Colonic mucosa (tissue), 4 donors: ENCODE measurements at regions of chr6 and their contacts with region 1.

Region 1: DNA sequence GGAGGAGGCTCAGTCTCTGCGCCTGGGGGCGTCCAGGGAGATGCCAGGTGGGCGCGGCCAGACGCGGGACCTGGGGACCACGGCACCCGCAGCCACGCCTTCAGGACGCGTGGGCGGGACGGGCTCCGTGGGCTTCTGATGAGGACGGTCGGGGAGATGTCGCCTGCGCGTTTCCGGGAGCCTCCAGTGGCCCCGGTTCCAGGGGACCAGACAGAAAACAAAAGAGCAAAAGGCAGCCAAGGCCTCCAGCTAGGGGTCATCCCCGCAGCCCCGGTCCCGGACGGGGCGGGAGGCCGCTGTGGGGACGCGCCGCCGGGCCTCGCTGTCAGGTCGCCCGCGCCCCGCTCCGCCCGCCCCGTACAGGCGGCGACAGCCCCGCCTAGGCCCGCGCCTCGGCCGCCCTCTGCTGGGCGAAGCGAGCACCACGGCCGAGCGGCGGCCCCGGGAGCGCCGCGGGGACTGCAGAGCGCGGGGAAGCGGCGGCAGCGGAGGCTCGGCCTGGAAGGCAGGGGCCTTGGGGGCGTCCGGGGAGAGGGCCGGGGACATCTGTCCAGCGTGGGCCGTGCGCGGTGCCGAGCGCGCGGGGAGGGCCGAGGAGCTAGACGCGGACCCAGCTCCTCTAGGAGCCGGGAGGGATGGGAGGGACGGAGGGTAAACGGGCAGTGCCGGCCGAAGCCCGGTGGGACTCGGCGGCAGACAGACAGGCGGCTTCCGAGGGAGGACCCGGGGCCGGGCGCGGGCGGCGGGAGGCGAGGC is 48.7 kb downstream of the TMEM242 start:
- DNase-seq: peak; percentile 64
- H3K4me3 ChIP-seq: peak overlapping the region; percentile 78
- H3K27ac ChIP-seq: peak overlapping the region; percentile 47
- H3K4me1 ChIP-seq: no peaks in the 10 kb centered on the region
- H3K27me3 ChIP-seq: no peaks in the 10 kb centered on the region
- CTCF ChIP-seq: peak; percentile 57

Region 2: DNA sequence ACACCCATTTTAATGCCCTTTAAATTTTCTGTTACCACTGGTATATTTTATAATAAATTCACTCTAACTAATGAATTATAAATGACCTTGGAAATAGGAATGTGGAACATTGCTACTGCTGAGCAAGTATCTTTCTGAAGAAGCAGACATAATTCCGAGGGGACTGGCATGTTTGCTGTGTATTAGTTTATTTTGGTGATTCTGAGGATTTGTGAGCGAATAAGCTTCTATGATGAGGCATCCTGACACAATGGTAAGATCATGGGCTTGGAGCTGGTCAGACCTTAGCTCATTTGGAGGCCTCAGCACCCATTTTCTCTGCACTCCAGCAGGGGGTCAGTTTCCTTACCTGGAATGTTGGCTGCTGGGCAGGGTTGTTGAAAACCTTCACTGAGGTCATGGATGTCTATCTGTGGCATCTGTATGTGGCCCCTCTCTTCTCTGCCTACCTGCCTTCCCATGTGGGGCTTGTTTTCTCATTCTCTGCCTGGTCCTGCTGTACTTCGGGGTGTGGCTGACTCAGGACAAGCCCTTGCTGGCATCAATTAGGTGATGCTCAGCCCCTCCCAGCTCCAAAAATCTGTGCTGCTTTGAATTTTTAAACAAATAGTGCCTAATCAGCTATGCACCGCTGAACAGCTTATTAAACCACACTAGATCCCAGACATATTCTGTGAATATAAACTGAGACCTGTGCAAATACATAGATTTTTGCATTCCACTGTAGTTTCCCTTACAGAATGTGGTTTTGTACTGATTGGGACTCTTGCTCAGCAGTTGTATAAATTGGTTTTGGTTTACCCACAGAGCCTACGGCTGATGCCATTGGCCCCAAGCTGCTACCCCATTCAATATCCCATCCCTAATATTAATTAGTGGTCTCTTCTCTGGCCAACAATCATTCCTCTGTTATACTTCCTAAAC is 486.8 kb before region 1 on chr6:
- intact Hi-C with region 1: loop called (anchors 5 kb)
- DNase-seq: no peak
- H3K4me3 ChIP-seq: no peak overlapping the region
- H3K27ac ChIP-seq: no peak overlapping the region
- H3K4me1 ChIP-seq: no peaks in the 10 kb centered on the region
- H3K27me3 ChIP-seq: no peaks in the 10 kb centered on the region
- CTCF ChIP-seq: no peak

Region 3: GRCh38 chr6:157034436-157035230 is 240.0 kb before region 1 on chr6:
- intact Hi-C with region 1: loop called (anchors 10 kb)
- DNase-seq: no peak
- H3K4me3 ChIP-seq: no peak overlapping the region
- H3K27ac ChIP-seq: no peak overlapping the region
- H3K4me1 ChIP-seq: peaks cover 6% of the 10 kb centered on the region
- H3K27me3 ChIP-seq: no peaks in the 10 kb centered on the region
- CTCF ChIP-seq: peak; percentile 53

Region 4: DNA sequence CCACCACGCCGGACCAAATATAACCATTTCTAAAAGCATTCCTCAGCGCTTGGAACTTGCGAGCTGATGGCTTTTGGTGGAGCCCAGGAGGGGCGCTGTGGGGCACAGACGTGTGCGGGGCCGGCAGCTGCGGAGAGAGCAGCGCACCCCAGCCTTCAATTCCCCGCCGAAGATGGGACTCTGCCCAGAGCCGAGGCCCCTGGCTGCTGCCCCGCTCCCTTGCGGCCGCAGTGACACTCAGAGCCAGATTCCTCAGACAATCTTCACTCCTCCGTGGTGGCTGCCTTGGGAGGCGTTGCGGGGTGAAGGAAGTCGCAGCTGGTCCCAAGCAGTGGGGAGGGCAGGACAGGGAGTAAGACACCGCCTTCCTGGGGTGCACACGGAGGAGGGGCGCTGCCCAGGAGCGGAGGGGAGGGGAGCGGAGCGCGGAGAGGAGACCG is 39.0 kb before region 1 on chr6:
- intact Hi-C with region 1: loop called (anchors 5 kb)
- DNase-seq: peak; percentile 67
- H3K4me3 ChIP-seq: peak overlapping the region; percentile 52
- H3K27ac ChIP-seq: no peak overlapping the region
- H3K4me1 ChIP-seq: no peaks in the 10 kb centered on the region
- H3K27me3 ChIP-seq: peaks cover 12% of the 10 kb centered on the region
- CTCF ChIP-seq: peak; percentile 54